Naive thymus-derived CD4-positive, alpha-beta T cell (primary cell): ENCODE measurements at regions of chr1 and their contacts with region 1.

Region 1: DNA sequence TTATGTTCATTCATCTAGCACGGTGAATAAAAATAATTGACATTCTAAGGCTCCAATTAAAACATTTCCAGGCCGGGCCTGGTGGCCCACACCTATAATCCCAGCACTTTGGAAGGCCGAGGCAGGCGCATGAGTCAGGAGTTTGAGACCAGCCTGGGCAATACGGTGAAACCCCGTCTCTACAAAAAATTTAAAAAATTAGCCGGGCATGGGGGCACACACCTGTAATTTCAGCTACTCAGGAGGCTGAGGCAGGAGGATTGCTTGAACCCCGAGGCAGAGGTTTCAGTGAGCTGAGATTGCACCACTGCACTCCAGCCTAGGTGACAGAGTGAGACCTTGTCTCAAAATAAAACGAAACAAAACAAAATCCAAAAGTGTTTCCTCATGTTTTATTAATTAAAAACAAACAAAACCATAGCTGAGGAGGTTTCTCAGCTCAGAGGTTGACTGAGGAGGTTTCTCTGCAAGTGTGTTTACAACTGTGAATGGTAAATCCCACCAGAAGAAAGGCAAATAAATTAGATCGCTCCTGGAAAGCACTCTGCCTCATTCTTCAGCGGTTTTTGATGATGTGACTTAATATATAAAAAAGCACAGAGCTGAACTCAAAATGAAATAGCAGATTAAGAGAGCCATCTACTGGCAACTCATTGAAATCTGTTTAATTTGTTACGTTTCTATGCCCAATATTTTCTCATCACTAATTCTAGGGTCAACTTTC is 37.7 kb upstream of the ATG4C start:
- DNase-seq: peak in 5 of 9 donors; percentile 26 to 48 (median 38)
- ATAC-seq: peak; percentile 29
- H3K4me3 ChIP-seq: no peak overlapping the region
- H3K4me3 Mint-ChIP-seq: no peak overlapping the region
- H3K27ac ChIP-seq: no peak overlapping the region
- H3K27ac Mint-ChIP-seq: no peak overlapping the region
- H3K4me1 ChIP-seq: no peaks in the 10 kb centered on the region
- H3K4me1 Mint-ChIP-seq: no peaks in the 10 kb centered on the region
- H3K27me3 ChIP-seq: no peaks in the 10 kb centered on the region
- H3K27me3 Mint-ChIP-seq: peaks cover 0 to 28% (median 9%) of the 10 kb centered on the region in 5 donors

Region 2: DNA sequence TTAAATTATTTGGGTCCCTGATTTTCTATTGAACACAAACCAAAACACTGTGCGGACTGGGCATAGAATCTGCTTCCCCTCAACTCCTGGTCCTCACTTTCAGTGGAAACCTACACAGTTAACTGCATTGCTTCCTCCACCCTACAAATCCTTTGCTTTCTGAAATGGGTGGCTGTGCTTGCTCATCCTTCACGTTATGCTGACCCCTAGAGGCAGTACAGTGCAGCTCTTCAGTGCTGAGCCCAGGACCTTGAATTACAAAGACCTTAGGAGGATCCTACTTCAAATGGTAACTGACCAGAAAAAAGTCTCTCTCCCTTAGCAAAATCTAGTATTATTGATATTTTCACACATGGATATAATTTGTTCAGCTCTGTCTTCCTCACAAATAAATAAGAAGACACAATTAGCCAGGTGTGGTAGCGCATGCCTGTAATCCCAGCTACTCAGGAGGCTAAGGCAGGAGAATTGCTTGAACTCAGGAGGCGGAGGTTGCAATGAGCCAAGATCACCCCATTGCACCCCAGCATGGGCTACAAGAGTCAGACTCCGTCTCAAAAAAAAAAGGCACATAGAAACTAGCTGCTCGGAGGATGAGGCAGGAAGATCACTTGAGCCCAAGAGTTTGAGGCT is 615.0 kb before region 1 on chr1:
- CTCF ChIA-PET with region 1: interaction called, 4 read pairs
- POLR2A ChIA-PET with region 1: no interaction called
- intact Hi-C with region 1: loop called in 1 of 2 experiments (anchors 1 kb)
- DNase-seq: peak in 5 of 9 donors; percentile 2 to 19 (median 7)
- ATAC-seq: peak; percentile 80
- H3K4me3 ChIP-seq: no peak overlapping the region
- H3K4me3 Mint-ChIP-seq: no peak overlapping the region
- H3K27ac ChIP-seq: no peak overlapping the region
- H3K27ac Mint-ChIP-seq: peak overlapping the region in 1 of 9 donors; percentile 36
- H3K4me1 ChIP-seq: no peaks in the 10 kb centered on the region
- H3K4me1 Mint-ChIP-seq: no peaks in the 10 kb centered on the region
- H3K27me3 ChIP-seq: no peaks in the 10 kb centered on the region
- H3K27me3 Mint-ChIP-seq: no peaks in the 10 kb centered on the region

Region 3: GRCh38 chr1:62175568-62176179 is 570.6 kb before region 1 on chr1:
- CTCF ChIA-PET with region 1: interaction called, 14 read pairs
- POLR2A ChIA-PET with region 1: no interaction called
- intact Hi-C with region 1: loop called (anchors 1 kb)
- DNase-seq: peak in 7 of 9 donors; percentile 15 to 57 (median 49)
- ATAC-seq: peak; percentile 46
- H3K4me3 ChIP-seq: no peak overlapping the region
- H3K4me3 Mint-ChIP-seq: no peak overlapping the region
- H3K27ac ChIP-seq: no peak overlapping the region
- H3K27ac Mint-ChIP-seq: no peak overlapping the region
- H3K4me1 ChIP-seq: no peaks in the 10 kb centered on the region
- H3K4me1 Mint-ChIP-seq: no peaks in the 10 kb centered on the region
- H3K27me3 ChIP-seq: no peaks in the 10 kb centered on the region
- H3K27me3 Mint-ChIP-seq: peaks cover 0 to 16% (median 5%) of the 10 kb centered on the region in 5 donors

Region 4: GRCh38 chr1:62407405-62408009 is 338.7 kb before region 1 on chr1:
- CTCF ChIA-PET with region 1: no interaction called
- POLR2A ChIA-PET with region 1: no interaction called
- intact Hi-C with region 1: loop called in 1 of 2 experiments (anchors 1 kb)
- DNase-seq: peak in 6 of 9 donors; percentile 30 to 64 (median 50)
- ATAC-seq: peak; percentile 70
- H3K4me3 ChIP-seq: no peak overlapping the region
- H3K4me3 Mint-ChIP-seq: no peak overlapping the region
- H3K27ac ChIP-seq: no peak overlapping the region
- H3K27ac Mint-ChIP-seq: peak overlapping the region in 1 of 9 donors; percentile 1
- H3K4me1 ChIP-seq: no peaks in the 10 kb centered on the region
- H3K4me1 Mint-ChIP-seq: no peaks in the 10 kb centered on the region
- H3K27me3 ChIP-seq: no peaks in the 10 kb centered on the region
- H3K27me3 Mint-ChIP-seq: peaks cover 0 to 6% (median 0%) of the 10 kb centered on the region in 5 donors

Region 5: DNA sequence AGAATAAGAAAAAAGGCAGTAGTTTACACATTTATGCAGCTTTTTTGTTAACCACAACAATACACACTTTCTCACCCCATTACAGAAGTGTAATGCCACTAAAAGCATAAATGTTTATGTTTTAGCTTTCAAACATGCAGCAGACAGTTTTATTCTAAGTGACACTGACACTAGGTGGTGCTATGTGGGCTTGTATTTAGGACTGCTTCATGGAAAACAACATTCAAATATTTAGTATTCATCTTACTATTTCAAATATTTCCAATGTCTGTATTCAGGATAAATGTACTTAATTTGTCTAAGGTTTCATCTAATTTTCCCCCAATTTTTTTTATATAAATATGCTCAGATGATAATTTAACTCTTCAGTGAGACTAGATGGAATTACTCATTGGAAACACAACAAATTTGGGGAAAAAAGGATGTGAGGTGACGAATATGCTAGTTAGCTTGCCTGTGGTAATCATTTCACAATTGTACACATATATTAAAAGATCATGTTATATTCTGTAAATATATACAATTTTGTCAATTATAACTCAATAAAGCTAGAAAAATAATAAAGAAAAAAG is 238.0 kb before region 1 on chr1:
- CTCF ChIA-PET with region 1: interaction called, 66 read pairs
- POLR2A ChIA-PET with region 1: no interaction called
- intact Hi-C with region 1: loop called (anchors 1 kb)
- DNase-seq: peak in 5 of 9 donors; percentile 5 to 37 (median 17)
- ATAC-seq: no peak
- H3K4me3 ChIP-seq: no peak overlapping the region
- H3K4me3 Mint-ChIP-seq: no peak overlapping the region
- H3K27ac ChIP-seq: no peak overlapping the region
- H3K27ac Mint-ChIP-seq: no peak overlapping the region
- H3K4me1 ChIP-seq: no peaks in the 10 kb centered on the region
- H3K4me1 Mint-ChIP-seq: no peaks in the 10 kb centered on the region
- H3K27me3 ChIP-seq: no peaks in the 10 kb centered on the region
- H3K27me3 Mint-ChIP-seq: no peaks in the 10 kb centered on the region